CD8-positive, alpha-beta T cell (primary cell): ENCODE measurements at regions of chr10 and their contacts with region 1.

Region 1: DNA sequence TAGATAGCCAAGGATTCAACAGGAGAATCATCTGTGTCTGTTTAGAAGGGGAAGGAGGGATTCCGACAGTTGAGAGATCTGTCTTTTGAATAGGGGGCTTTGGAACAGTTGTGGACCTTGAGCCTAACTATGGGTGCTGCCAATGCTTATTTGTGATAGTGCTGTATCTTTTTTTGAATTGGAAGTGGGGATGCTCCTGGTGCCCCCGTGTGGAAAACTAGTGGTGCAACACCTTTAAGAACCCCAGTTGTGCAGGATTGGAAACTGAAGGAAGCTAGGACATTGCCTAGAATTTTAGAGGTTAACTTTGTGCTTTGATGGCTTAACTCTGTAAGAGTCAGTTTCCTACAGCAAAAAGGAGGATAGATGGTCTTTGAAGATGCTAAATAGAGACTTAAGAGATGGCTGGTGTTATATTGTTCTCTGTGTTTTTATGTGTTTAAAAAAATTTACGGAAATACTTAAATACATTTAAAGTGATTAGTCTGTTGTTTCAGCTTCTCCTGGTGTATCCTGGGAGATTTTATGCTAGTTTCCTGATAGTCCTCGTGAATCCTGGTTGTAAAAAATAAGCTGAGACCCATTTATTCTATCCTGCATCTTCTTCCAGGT is 69.3 kb downstream of the AP3M1 start:
- DNase-seq: peak; percentile 7 to 67 (median 36)
- ATAC-seq: peak; percentile 62
- H3K4me3 ChIP-seq: no peak overlapping the region
- H3K4me3 Mint-ChIP-seq: no peak overlapping the region
- H3K27ac ChIP-seq: no peak overlapping the region
- H3K27ac Mint-ChIP-seq: no peak overlapping the region
- H3K4me1 ChIP-seq: peaks cover 4% of the 10 kb centered on the region
- H3K4me1 Mint-ChIP-seq: peaks cover 17% of the 10 kb centered on the region
- H3K27me3 ChIP-seq: no peaks in the 10 kb centered on the region
- H3K27me3 Mint-ChIP-seq: no peaks in the 10 kb centered on the region
- CTCF ChIP-seq: peak; percentile 66

Region 2: GRCh38 chr10:73894245-73894971 is 186.9 kb before region 1 on chr10:
- CTCF ChIA-PET with region 1: interaction called, 15 read pairs
- POLR2A ChIA-PET with region 1: no interaction called
- intact Hi-C with region 1: no loop called
- DNase-seq: peak in 1 of 9 experiments; percentile 24
- ATAC-seq: peak; percentile 36
- H3K4me3 ChIP-seq: no peak overlapping the region
- H3K4me3 Mint-ChIP-seq: no peak overlapping the region
- H3K27ac ChIP-seq: no peak overlapping the region
- H3K27ac Mint-ChIP-seq: no peak overlapping the region
- H3K4me1 ChIP-seq: no peaks in the 10 kb centered on the region
- H3K4me1 Mint-ChIP-seq: no peaks in the 10 kb centered on the region
- H3K27me3 ChIP-seq: no peaks in the 10 kb centered on the region
- H3K27me3 Mint-ChIP-seq: peaks cover 8% of the 10 kb centered on the region
- CTCF ChIP-seq: no peak

Region 3: DNA sequence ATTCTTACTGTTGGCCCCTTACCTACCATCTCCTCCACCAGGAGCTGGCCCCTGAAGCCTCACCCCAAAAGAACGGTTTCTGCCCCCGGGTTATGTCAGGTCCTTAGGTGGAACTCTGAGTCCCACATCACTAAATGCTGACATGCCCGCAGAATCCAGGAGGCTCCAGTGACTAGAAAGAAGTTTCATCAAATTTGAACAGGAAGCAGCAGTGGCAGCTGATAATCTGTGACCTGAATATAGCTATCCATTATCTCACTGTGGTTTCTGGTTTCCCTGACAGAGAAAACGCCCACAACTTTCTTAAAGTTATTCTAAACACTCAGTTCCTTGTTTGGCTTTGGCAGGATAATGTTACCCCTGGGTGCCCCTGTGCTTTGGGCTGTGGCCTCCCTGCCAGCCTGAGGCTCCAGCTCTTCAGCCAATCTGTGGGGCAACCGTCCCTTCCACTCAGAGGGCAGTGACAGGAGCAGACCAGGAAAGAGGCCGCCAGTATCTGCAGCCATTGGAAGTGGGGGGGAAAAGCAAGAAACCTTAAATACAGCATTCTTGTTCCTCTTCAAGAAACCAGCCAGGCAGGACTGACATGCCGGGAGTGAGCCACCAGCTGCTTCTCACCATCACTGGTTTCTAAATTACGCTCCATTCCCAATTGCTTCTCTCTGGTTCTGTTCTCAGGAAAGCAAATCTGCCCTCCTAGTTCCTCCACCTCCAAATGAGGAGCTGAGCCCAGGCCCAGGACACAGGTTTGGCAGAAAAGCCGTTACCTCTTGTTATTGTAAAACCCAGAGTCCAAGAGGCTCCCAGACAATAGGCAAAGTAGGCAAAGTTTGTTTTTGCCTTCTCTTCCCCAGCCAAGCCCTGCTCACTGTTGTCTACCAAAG is 124.6 kb before region 1 on chr10:
- CTCF ChIA-PET with region 1: interaction called, 19 read pairs
- POLR2A ChIA-PET with region 1: interaction called, 5 read pairs
- intact Hi-C with region 1: loop called in 1 of 2 experiments (anchors 2 kb)
- DNase-seq: peak in 6 of 9 experiments; percentile 12 to 77 (median 36)
- ATAC-seq: peak; percentile 80
- H3K4me3 ChIP-seq: peak overlapping the region; percentile 3 to 26
- H3K4me3 Mint-ChIP-seq: peak overlapping the region; percentile 64
- H3K27ac ChIP-seq: peak overlapping the region in 1 of 2 experiments; percentile 72
- H3K27ac Mint-ChIP-seq: peak overlapping the region; percentile 86
- H3K4me1 ChIP-seq: peaks cover 27% of the 10 kb centered on the region
- H3K4me1 Mint-ChIP-seq: peaks cover 43% of the 10 kb centered on the region
- H3K27me3 ChIP-seq: no peaks in the 10 kb centered on the region
- H3K27me3 Mint-ChIP-seq: no peaks in the 10 kb centered on the region
- CTCF ChIP-seq: no peak

Region 4: DNA sequence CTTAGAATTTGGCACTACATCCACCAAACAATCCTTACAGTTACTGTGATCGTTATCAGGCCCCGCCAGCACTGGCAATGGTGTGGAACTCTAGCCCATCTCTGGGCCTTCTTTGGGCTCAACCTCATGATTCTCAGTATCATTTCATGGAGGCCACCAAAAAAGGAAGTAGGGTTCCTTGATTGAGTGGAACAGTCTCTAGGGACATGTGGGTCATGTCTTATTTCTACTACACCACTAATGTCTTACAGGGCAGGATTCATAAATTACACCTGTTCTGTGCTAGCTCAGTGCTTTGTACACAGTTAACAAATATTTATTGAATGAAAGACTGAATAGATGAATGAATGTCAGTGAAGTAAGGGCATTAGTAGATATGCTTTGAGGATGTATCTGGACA is 15.5 kb after region 1 on chr10:
- CTCF ChIA-PET with region 1: interaction called, 20 read pairs
- POLR2A ChIA-PET with region 1: no interaction called
- intact Hi-C with region 1: no loop called
- DNase-seq: no peak
- ATAC-seq: no peak
- H3K4me3 ChIP-seq: no peak overlapping the region
- H3K4me3 Mint-ChIP-seq: no peak overlapping the region
- H3K27ac ChIP-seq: no peak overlapping the region
- H3K27ac Mint-ChIP-seq: peak overlapping the region; percentile 47
- H3K4me1 ChIP-seq: no peaks in the 10 kb centered on the region
- H3K4me1 Mint-ChIP-seq: no peaks in the 10 kb centered on the region
- H3K27me3 ChIP-seq: no peaks in the 10 kb centered on the region
- H3K27me3 Mint-ChIP-seq: no peaks in the 10 kb centered on the region
- CTCF ChIP-seq: no peak

Region 5: GRCh38 chr10:74107391-74107790 is 26.1 kb after region 1 on chr10:
- CTCF ChIA-PET with region 1: interaction called, 10 read pairs
- POLR2A ChIA-PET with region 1: no interaction called
- intact Hi-C with region 1: no loop called
- DNase-seq: no peak
- ATAC-seq: no peak
- H3K4me3 ChIP-seq: no peak overlapping the region
- H3K4me3 Mint-ChIP-seq: no peak overlapping the region
- H3K27ac ChIP-seq: no peak overlapping the region
- H3K27ac Mint-ChIP-seq: no peak overlapping the region
- H3K4me1 ChIP-seq: no peaks in the 10 kb centered on the region
- H3K4me1 Mint-ChIP-seq: no peaks in the 10 kb centered on the region
- H3K27me3 ChIP-seq: no peaks in the 10 kb centered on the region
- H3K27me3 Mint-ChIP-seq: no peaks in the 10 kb centered on the region
- CTCF ChIP-seq: no peak

Region 6: DNA sequence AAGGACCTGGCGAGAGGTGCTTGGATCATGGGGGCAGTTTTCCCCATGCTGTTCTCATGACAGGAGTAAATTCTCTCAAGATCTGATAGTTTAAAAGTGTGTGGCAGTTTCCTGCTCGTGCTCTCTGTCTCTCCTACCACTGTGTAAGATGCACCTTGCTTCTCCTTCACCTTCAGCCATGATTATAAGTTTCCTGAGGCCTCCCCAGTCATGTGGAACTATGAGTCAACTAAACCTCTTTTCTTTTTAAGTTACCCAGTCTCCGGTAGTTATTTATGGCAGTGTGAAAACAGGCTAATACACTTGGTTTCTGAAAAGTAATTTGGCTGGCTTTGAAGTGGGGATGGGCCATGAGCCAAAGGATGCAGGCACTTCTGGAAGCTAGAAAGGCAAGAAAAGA is 477.1 kb after region 1 on chr10:
- CTCF ChIA-PET with region 1: no interaction called
- POLR2A ChIA-PET with region 1: no interaction called
- intact Hi-C with region 1: no loop called
- DNase-seq: no peak
- ATAC-seq: no peak
- H3K4me3 ChIP-seq: no peak overlapping the region
- H3K4me3 Mint-ChIP-seq: no peak overlapping the region
- H3K27ac ChIP-seq: no peak overlapping the region
- H3K27ac Mint-ChIP-seq: no peak overlapping the region
- H3K4me1 ChIP-seq: no peaks in the 10 kb centered on the region
- H3K4me1 Mint-ChIP-seq: no peaks in the 10 kb centered on the region
- H3K27me3 ChIP-seq: no peaks in the 10 kb centered on the region
- H3K27me3 Mint-ChIP-seq: no peaks in the 10 kb centered on the region
- CTCF ChIP-seq: no peak